ENCODE measurements at regions of chr15 and their contacts with region 1.

Region 1: DNA sequence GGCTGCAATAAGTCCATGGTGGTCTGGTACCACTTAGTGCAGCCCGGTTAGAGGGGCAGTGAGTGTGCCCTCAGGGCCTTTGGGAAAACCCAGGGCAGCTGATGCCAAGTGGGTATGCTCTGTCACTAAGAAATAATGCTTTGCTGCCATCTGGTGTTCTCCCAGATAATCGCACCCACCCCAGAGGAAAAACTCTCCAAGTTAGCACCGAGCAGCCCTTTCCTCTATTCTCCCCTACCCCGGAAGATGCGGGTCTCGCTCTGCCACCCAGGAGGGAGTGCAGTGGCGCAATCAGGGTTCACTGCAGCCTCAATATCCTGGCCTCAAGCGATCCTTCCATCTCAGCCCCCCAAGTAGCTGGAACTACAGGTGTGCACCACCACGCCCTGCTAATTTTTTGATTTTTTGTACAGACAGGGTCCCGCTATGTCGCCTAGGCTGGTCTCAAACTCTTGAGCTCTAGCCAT is 21.3 kb upstream of the DAPK2 start:
- DNase-seq: peak; percentile 59 to 71 (median 68)
- ATAC-seq: peak; percentile 81
- H3K4me3 ChIP-seq: no peak overlapping the region
- H3K27ac ChIP-seq: no peak overlapping the region
- H3K4me1 ChIP-seq: peaks cover 3 to 29% of the 10 kb centered on the region in 2 experiments; a peak in 4 of 5 replicates
- H3K27me3 ChIP-seq: no peaks in the 10 kb centered on the region
- CTCF ChIP-seq: peak; percentile 77 to 89 (median 82)
- EP300 ChIP-seq: no peak
- POLR2A ChIP-seq: no peak
- RAD21 ChIP-seq: peak; percentile 82 to 91

Region 2: GRCh38 chr15:63277038-63277892 is 790.3 kb before region 1 on chr15 and contains the start of gene APH1B:
- CTCF ChIA-PET with region 1: no interaction called
- POLR2A ChIA-PET with region 1: no interaction called
- in situ Hi-C with region 1: loop called (anchors 25 kb)
- intact Hi-C with region 1: no loop called
- DNase-seq: peak; percentile 89 to 96 (median 94)
- ATAC-seq: peak; percentile 93
- H3K4me3 ChIP-seq: peak within 1 kb of the TSS; percentile 65
- H3K27ac ChIP-seq: peak within 1 kb of the TSS; percentile 82
- H3K4me1 ChIP-seq: peaks cover 12 to 18% of the 10 kb centered on the region in 2 experiments; a peak in 4 of 5 replicates
- H3K27me3 ChIP-seq: no peaks in the 10 kb centered on the region
- CTCF ChIP-seq: 0 out of 6 replicates have a peak, but pooled peaks of 2 of the 3 experiments have one; percentile 2 to 14
- EP300 ChIP-seq: no peak
- POLR2A ChIP-seq: peak; percentile 87; the same call in 1 of the 2 replicates
- RAD21 ChIP-seq: 0 out of 4 replicates have a peak, but pooled peaks of 1 of the 2 experiments have one; percentile 19
- polyA plus RNA-seq, gene APH1B: 7.0 to 8.7 TPM

Region 3: DNA sequence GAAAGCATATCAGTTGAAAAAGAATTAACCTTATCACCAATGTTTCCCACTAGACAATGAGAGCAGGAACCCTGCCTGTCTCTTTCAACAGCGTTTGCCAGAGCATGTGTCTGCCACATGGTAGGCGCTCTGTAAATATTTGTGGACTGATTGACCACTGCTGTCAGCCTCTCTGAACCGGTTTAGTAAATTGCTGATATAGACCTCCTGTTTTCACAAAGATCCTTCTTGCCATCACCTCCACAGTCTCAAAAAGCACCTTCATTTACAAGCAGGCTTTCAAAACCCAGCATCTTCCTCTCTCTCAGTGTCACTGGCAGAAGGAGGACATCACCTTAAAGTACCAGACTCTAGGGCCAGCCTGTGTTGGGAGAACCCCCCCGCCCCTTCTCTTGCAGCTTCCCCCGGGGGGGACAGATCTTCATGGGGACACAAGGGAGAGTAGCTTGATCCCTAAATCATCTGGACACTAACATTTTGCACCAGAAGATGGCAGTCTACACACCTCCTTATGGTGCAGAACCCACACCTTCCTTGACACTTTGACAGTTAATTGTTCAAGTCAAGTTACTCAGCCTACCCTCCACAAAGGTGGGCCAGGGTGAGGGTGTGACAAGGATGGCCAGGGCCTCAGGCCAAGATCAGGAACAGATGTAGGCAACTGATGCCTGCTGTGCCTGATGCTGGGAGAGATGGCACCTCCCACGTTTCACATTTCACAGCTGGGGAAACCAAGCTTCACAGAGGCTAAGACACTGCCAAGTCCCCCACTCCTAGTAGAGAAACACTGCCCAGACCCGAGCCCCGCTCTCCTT is 601.0 kb before region 1 on chr15:
- CTCF ChIA-PET with region 1: interaction called, 3 read pairs
- POLR2A ChIA-PET with region 1: no interaction called
- in situ Hi-C with region 1: loop called (anchors 25 kb)
- intact Hi-C with region 1: no loop called
- DNase-seq: peak; percentile 66 to 81 (median 74)
- ATAC-seq: peak; percentile 96
- H3K4me3 ChIP-seq: no peak overlapping the region
- H3K27ac ChIP-seq: no peak overlapping the region
- H3K4me1 ChIP-seq: peaks cover 0 to 8% of the 10 kb centered on the region in 2 experiments; a peak in 2 of 5 replicates
- H3K27me3 ChIP-seq: no peaks in the 10 kb centered on the region
- CTCF ChIP-seq: peak; percentile 71 to 77 (median 76)
- EP300 ChIP-seq: no peak
- POLR2A ChIP-seq: no peak
- RAD21 ChIP-seq: peak; percentile 74 to 89

Region 4: DNA sequence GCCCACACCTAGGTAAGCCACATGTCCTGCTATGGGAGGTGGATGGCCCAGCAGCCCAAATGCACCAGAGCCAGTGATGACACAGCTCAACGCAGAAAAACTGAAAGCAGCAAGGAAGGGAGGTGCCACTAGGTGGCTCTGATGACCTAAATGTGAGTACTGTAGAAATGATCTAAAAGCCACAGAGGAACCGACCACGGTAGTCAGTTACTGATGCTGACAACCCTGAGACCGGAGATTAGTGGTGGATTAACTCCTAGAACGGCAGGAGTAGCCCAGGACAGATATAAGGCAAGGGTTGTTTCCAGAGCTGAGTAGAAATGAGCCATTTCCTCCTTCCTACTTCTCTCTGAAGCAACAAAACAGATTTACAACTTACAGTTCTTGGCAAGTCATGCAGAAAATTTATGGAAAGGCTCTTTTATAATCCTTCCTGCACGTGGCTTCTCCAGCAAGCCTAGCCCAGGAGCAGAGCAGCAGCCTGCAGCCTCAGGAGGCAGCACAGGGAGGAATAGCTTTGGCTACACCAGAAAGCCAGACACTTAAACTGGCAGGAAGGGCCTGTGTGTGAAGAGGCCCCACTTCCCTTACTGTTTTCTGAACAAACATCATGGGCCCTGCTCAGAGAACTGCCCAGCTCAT is 457.3 kb before region 1 on chr15:
- CTCF ChIA-PET with region 1: interaction called, 4 read pairs
- POLR2A ChIA-PET with region 1: no interaction called
- in situ Hi-C with region 1: loop called (anchors 5 kb)
- intact Hi-C with region 1: loop called (anchors 1 kb)
- DNase-seq: peak; percentile 70 to 84 (median 76)
- ATAC-seq: peak; percentile 97
- H3K4me3 ChIP-seq: no peak overlapping the region
- H3K27ac ChIP-seq: peak overlapping the region; percentile 57
- H3K4me1 ChIP-seq: peaks cover 0 to 11% of the 10 kb centered on the region in 2 experiments; a peak in 3 of 5 replicates
- H3K27me3 ChIP-seq: no peaks in the 10 kb centered on the region
- CTCF ChIP-seq: peak; percentile 78 to 90 (median 81)
- EP300 ChIP-seq: no peak
- POLR2A ChIP-seq: no peak
- RAD21 ChIP-seq: peak; percentile 67 to 86

Region 5: GRCh38 chr15:63655683-63656372 is 411.8 kb before region 1 on chr15:
- CTCF ChIA-PET with region 1: no interaction called
- POLR2A ChIA-PET with region 1: no interaction called
- in situ Hi-C with region 1: no loop called
- intact Hi-C with region 1: no loop called
- DNase-seq: no peak
- ATAC-seq: no peak
- H3K4me3 ChIP-seq: no peak overlapping the region
- H3K27ac ChIP-seq: no peak overlapping the region
- H3K4me1 ChIP-seq: no peaks in the 10 kb centered on the region
- H3K27me3 ChIP-seq: no peaks in the 10 kb centered on the region
- CTCF ChIP-seq: no peak
- EP300 ChIP-seq: no peak
- POLR2A ChIP-seq: no peak
- RAD21 ChIP-seq: no peak

Region 6: DNA sequence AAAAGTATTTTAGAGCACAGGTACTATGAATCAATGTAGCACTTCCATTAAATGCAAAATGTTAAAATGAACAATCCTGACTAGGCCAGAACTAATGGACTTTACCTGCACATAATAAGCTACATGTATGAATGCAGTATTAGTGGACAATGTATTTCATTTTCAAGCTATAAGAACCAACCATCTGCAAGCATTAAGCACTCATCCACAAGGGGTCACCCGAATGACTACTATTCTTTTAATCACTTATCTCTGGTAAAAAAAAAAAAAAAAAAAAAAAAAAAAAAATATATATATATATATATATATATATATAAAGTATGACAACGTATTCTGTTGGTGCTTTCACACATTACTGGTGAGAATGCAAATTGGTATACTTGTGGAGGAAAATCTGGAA is 241.1 kb before region 1 on chr15:
- CTCF ChIA-PET with region 1: interaction called, 4 read pairs
- POLR2A ChIA-PET with region 1: no interaction called
- in situ Hi-C with region 1: no loop called
- intact Hi-C with region 1: loop called (anchors 5 kb)
- DNase-seq: peak in 1 of 4 experiments; percentile 66
- ATAC-seq: peak; percentile 51; the same call in 1 of the 3 replicates
- H3K4me3 ChIP-seq: no peak overlapping the region
- H3K27ac ChIP-seq: peak overlapping the region; percentile 53; the same call in 1 of the 3 replicates
- H3K4me1 ChIP-seq: peaks cover 16 to 23% of the 10 kb centered on the region in 2 experiments
- H3K27me3 ChIP-seq: no peaks in the 10 kb centered on the region
- CTCF ChIP-seq: peak; percentile 17 to 53 (median 25); a peak in 3 of 6 replicates
- EP300 ChIP-seq: no peak
- POLR2A ChIP-seq: no peak
- RAD21 ChIP-seq: peak; percentile 41 to 47

Region 7: DNA sequence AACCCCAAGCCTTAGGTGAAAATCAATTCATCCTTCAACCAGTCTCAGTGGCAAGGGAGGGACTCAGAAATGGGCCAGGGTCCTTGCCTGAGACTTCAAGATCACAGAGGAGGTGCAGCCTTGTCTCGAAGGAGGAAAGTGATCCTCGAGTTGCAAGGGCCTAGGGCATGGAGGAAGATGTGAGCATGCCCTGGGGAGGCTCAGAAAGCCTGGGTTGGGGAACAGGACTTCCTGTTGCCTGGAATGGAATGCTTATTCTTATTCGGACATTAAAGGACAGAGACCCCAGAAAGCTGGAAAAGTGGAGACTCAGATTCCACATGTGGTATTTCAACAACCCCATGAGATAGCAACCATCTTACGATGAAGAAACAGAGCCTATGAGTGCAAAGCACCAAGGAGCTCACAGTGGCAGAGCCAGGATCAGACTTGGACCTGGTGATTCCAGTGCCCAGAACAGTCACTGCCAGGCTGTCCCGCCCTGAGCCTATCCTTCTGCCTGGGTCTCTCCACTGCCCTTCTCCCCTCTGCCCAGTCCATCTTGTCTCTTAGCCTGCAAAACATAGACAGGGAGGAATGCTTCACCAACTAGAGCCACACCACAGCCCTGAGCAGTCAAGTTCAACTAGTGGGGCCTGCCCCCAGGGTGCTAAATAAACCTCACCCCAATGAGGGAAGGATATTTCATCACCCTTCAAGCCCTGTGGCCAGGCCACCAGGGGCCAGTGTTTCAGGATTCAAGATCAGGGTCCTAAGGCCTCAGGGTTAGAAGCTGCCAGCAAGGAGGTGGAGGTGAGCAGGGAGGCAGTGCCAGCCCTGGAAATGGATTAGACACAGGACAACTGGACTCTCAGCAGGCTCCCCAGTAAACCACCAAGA is 43.2 kb before region 1 on chr15:
- CTCF ChIA-PET with region 1: no interaction called
- POLR2A ChIA-PET with region 1: no interaction called
- in situ Hi-C with region 1: no loop called
- intact Hi-C with region 1: no loop called
- DNase-seq: no peak
- ATAC-seq: peak; percentile 89
- H3K4me3 ChIP-seq: no peak overlapping the region
- H3K27ac ChIP-seq: no peak overlapping the region
- H3K4me1 ChIP-seq: peaks cover 3 to 9% of the 10 kb centered on the region in 2 experiments; a peak in 4 of 5 replicates
- H3K27me3 ChIP-seq: no peaks in the 10 kb centered on the region
- CTCF ChIP-seq: peak; percentile 20 to 32 (median 22); a peak in 1 of 6 replicates
- EP300 ChIP-seq: no peak
- POLR2A ChIP-seq: no peak
- RAD21 ChIP-seq: no peak

Region 8: DNA sequence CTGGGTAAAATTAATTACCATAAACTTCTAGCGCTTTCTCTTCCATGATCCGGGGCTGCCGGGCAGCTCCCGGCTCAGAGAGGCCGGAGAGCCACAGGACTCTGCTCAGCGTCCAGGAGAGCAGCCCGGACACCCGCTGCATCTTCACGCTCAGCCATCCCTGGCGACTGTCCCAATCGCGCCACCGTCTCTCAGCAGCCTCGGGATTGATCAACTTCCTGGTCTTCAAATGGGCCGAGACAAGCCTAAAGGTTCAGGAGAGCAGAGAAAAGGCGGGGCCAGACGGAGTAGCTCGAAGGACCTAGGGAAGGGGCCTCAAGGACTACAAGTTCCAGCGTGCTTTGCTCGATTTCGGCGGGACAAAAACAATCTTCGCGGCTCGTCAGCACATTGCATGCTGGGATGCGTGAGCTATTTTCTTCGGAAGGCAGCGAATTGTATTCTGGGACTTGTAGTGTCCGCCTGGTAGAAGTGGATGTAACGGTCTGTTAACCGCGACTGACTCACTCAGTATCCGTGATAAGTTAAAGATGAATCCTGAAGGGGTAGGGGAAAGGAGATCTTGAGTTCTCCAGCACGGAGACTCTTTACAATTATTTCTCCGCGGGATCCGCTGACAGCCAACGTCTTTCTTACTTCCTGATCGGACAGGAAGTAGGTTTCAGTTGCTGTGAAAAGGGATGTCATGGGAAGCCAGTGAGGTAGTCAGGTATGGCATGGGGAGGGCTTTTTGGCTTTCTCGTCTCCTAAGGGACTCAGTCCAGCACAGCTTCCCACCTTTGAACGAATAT is 26.2 kb after region 1 on chr15 and contains the start of gene CIAO2A:
- CTCF ChIA-PET with region 1: no interaction called
- POLR2A ChIA-PET with region 1: interaction called, 11 read pairs
- in situ Hi-C with region 1: no loop called
- intact Hi-C with region 1: no loop called
- DNase-seq: peak; percentile 85 to 99 (median 89)
- ATAC-seq: peak; percentile 84
- H3K4me3 ChIP-seq: peak within 1 kb of the TSS; percentile 81
- H3K27ac ChIP-seq: peak within 1 kb of the TSS; percentile 99
- H3K4me1 ChIP-seq: peaks cover 8 to 25% of the 10 kb centered on the region in 2 experiments
- H3K27me3 ChIP-seq: no peaks in the 10 kb centered on the region
- CTCF ChIP-seq: no peak; a peak in 1 of 6 replicates
- EP300 ChIP-seq: peak; percentile 30
- POLR2A ChIP-seq: peak; percentile 88
- RAD21 ChIP-seq: no peak
- polyA plus RNA-seq, gene CIAO2A: 354 to 408 TPM

Region 9: GRCh38 chr15:64131547-64131946 is 64.0 kb after region 1 on chr15:
- CTCF ChIA-PET with region 1: no interaction called
- POLR2A ChIA-PET with region 1: no interaction called
- in situ Hi-C with region 1: no loop called
- intact Hi-C with region 1: no loop called
- DNase-seq: no peak
- ATAC-seq: no peak
- H3K4me3 ChIP-seq: no peak overlapping the region
- H3K27ac ChIP-seq: no peak overlapping the region
- H3K4me1 ChIP-seq: peaks cover 0 to 4% of the 10 kb centered on the region in 2 experiments; a peak in 1 of 5 replicates
- H3K27me3 ChIP-seq: no peaks in the 10 kb centered on the region
- CTCF ChIP-seq: no peak
- EP300 ChIP-seq: no peak
- POLR2A ChIP-seq: no peak
- RAD21 ChIP-seq: no peak